ENCODE measurements at regions of chr6 and their contacts with region 1.

Region 1: DNA sequence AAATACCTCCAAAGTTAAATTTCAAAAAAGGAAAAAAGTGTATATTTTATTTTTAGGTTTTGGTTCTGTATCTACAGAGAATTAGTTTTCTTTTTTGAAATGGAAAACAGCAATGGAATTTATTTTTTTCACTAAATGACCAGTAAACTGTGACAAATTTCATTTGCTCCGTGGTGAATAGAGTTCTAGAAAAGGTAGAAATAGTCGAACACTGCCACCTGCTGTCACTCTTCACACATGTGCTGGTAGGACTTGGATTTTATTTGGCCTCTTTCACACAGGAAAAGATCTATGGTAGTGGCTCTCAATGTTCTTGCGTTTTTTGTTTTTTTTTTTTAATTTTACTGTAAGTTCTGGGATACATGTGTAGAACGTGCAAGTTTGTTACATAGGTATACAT is 312.5 kb downstream of the EYA4 start:
- DNase-seq: peak in 1 of 2 donors; percentile 38
- ATAC-seq: peak; percentile 41

Region 2: DNA sequence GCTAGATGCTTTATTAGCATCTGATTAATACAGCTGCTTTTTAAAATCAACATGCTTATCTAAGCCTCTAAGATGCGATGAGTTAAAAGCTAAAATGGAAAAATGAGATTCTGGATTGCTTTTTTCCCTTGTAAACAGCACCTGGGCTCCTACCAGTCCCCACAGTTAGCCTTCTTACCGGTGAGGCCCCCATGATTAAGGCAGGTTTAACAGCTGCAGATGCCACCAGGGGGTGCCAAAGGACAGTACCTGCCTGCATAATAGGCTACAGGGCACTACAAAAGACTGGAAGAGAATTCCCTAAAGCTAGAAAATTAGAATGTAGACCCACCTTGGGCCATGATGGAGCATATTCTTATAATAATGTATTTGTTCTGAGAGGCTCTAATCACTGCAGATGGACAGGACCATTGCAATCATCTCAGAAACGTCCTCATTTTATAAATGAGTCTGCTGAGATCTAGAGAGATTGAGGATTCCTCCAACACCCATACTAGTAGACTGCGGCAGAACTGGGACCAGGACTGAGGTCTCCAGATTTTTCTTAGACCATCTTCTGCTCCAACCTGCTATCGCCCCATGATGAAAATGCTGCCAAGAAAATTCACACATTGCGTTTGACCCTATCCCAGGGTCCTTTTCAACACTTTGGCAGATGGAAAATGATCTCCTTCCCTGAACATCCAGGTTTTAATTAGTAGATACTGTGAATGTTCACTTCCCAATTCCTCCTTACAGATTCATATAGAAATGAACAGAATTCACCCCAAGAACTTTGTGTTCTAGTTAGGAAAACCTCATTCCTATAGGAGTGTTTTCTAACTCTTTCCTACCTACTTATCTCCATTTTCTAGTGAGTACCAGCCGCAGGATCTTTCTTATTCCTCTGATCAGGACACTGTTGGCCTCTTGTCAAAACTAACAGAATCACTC is 590.5 kb before region 1 on chr6:
- intact Hi-C with region 1: loop called in 1 of 2 experiments (anchors 5 kb)
- DNase-seq: peak; percentile 35 to 72
- ATAC-seq: peak; percentile 68

Region 3: DNA sequence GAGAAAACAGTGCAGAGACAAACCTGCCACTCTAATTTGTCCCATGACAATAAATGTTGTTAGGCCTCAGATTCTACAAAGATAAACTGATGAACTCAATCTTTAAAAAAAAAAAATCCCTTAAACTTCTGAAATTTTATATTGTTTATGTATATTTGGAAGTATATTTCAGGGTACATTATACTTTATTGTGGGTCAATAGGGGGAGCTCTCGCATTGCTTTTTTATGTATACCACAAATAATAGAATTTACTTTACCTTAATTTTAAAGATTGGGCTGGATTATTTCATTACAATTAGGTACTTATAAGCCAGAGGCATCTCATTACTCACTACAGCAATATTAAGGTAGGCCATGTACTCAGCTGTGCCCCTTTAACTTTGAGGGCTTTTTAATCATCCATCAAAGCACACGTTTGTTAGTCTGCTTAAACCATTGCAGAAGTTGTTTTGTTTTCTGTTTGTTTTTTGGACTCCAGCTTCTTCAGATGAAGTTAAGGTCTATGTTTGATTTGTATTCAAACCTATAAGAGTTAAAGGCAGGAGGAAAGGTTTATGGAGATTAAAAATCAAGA is 368.8 kb before region 1 on chr6:
- intact Hi-C with region 1: loop called in 1 of 2 experiments (anchors 10 kb)
- DNase-seq: no peak
- ATAC-seq: no peak

Region 4: DNA sequence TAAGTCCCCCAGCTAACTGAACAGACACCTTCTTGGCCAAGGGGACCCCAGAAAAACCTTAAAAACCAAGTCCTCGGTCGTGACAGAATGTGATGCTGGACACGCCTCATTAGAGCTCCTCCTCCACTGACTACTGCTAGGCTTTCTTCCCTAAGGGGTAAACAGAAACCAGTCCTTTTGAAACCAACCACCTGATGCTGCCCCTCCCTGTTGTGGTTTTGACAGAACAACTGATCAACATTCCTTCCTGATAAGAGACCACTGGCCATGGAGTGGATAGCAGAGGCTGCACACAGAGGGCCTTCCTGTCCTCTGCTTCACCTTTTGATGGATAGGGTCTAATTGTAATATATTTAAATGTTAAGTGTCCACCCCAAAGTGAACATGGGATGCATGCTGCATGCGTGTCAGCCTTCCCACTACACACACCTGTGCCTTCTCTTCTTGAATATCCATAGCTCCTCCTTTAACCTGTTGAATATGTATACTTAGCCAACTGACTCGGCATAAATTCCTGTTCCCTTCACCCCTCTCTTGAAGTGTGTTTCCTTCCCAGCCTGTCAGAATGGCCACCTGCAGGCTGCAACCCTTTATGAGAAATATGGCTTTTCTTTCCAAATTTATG is 526.6 kb after region 1 on chr6:
- intact Hi-C with region 1: loop called in 1 of 2 experiments (anchors 10 kb)
- DNase-seq: no peak
- ATAC-seq: no peak

Measured in left colon (tissue), 2 donors.